Activated naive CD4-positive, alpha-beta T cell treated with anti-CD3 and anti-CD28 coated beads for 36 hours (primary cell): ENCODE measurements at regions of chr19 and their contacts with region 1.

Region 1: DNA sequence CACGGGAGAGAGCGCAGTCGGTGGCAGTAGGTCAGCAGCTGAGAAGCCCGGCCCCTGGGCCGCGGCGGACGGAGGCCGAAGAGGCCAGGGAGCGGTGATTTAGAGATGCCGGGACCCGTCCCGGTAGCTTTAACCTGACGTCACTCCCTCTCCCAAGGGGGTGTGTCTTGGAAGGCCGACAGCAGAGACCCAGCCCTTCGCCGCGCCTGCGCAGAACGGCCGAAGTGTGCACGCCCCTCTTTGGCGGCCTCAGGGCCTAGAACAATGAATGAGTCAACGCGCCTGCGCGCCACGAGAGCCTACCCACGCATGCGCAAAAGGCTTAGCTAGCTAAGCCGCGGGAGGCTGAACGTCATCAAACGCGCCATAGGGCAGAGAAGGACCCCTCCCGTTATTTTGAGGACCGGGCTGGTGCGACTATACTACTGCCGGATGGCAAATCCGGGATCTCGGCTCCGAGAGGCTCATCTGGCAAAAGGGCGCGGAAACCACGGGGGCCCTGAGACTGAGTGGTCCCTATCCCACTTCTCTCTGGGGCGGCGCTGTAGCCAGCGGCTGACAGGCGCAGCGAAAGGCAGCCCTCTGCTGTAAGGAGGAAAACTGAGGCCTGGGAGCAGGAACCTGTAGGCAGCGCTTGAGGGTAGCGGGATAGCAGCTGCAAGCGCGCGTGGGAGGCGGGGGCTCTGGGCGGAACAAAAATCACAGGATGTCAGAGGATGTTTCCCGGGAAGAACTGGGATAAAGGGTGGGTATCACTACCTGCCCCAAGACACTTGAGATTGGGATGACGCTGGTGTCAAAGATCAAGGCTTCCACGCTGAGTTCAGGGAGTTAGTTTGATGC is at the starts of genes IRGQ and ZNF576:
- DNase-seq: peak; percentile 100
- H3K4me3 Mint-ChIP-seq: peak within 1 kb of the TSS; percentile 93
- H3K27ac Mint-ChIP-seq: peak within 1 kb of the TSS; percentile 97
- H3K4me1 Mint-ChIP-seq: peaks cover 29% of the 10 kb centered on the region
- H3K27me3 Mint-ChIP-seq: no peaks in the 10 kb centered on the region
- total RNA-seq, gene IRGQ: 17.2 to 18.7 TPM
- total RNA-seq, gene ZNF576: 11.6 to 11.7 TPM

Region 2: GRCh38 chr19:43078311-43078710 is 517.9 kb before region 1 on chr19:
- CTCF ChIA-PET with region 1: no interaction called
- intact Hi-C with region 1: no loop called
- DNase-seq: no peak
- H3K4me3 Mint-ChIP-seq: no peak overlapping the region
- H3K27ac Mint-ChIP-seq: no peak overlapping the region
- H3K4me1 Mint-ChIP-seq: no peaks in the 10 kb centered on the region
- H3K27me3 Mint-ChIP-seq: no peaks in the 10 kb centered on the region

Region 3: GRCh38 chr19:43463381-43464136 is 132.7 kb before region 1 on chr19:
- CTCF ChIA-PET with region 1: interaction called, 4 read pairs
- intact Hi-C with region 1: loop called (anchors 1 kb)
- DNase-seq: peak; percentile 100
- H3K4me3 Mint-ChIP-seq: peak overlapping the region; percentile 94
- H3K27ac Mint-ChIP-seq: peak overlapping the region; percentile 86
- H3K4me1 Mint-ChIP-seq: peaks cover 37% of the 10 kb centered on the region
- H3K27me3 Mint-ChIP-seq: no peaks in the 10 kb centered on the region

Region 4: GRCh38 chr19:43526884-43527859 is 69.0 kb before region 1 on chr19 and contains the start of gene ETHE1:
- CTCF ChIA-PET with region 1: interaction called, 14 read pairs
- intact Hi-C with region 1: loop called (anchors 1 kb)
- DNase-seq: peak; percentile 73
- H3K4me3 Mint-ChIP-seq: peak within 1 kb of the TSS; percentile 97
- H3K27ac Mint-ChIP-seq: peak within 1 kb of the TSS; percentile 96
- H3K4me1 Mint-ChIP-seq: peaks cover 22% of the 10 kb centered on the region
- H3K27me3 Mint-ChIP-seq: no peaks in the 10 kb centered on the region
- total RNA-seq, gene ETHE1: 62.1 to 64.4 TPM

Region 5: GRCh38 chr19:43562698-43563241 is 33.5 kb before region 1 on chr19:
- CTCF ChIA-PET with region 1: interaction called, 14 read pairs
- intact Hi-C with region 1: loop called (anchors 1 kb)
- DNase-seq: peak; percentile 88
- H3K4me3 Mint-ChIP-seq: peak overlapping the region; percentile 25
- H3K27ac Mint-ChIP-seq: peak overlapping the region; percentile 96
- H3K4me1 Mint-ChIP-seq: peaks cover 45% of the 10 kb centered on the region
- H3K27me3 Mint-ChIP-seq: no peaks in the 10 kb centered on the region

Region 6: GRCh38 chr19:43619262-43620060 is 23.2 kb after region 1 on chr19 and contains the start of gene ZNF428:
- CTCF ChIA-PET with region 1: no interaction called
- intact Hi-C with region 1: loop called (anchors 1 kb)
- DNase-seq: peak; percentile 90
- H3K4me3 Mint-ChIP-seq: peak within 1 kb of the TSS; percentile 94
- H3K27ac Mint-ChIP-seq: peak within 1 kb of the TSS; percentile 96
- H3K4me1 Mint-ChIP-seq: peaks cover 19% of the 10 kb centered on the region
- H3K27me3 Mint-ChIP-seq: no peaks in the 10 kb centered on the region
- total RNA-seq, gene ZNF428: 11.4 to 11.8 TPM

Region 7: GRCh38 chr19:43754503-43755255 is 158.5 kb after region 1 on chr19 and contains the start of gene SMG9:
- CTCF ChIA-PET with region 1: no interaction called
- intact Hi-C with region 1: loop called (anchors 1 kb)
- DNase-seq: peak; percentile 98
- H3K4me3 Mint-ChIP-seq: peak within 1 kb of the TSS; percentile 99
- H3K27ac Mint-ChIP-seq: peak within 1 kb of the TSS; percentile 100
- H3K4me1 Mint-ChIP-seq: peaks cover 64% of the 10 kb centered on the region
- H3K27me3 Mint-ChIP-seq: no peaks in the 10 kb centered on the region
- total RNA-seq, gene SMG9: 103 to 111 TPM